Right lobe of liver (tissue), 6 donors: ENCODE measurements at regions of chr17 and their contacts with region 1.

Region 1: DNA sequence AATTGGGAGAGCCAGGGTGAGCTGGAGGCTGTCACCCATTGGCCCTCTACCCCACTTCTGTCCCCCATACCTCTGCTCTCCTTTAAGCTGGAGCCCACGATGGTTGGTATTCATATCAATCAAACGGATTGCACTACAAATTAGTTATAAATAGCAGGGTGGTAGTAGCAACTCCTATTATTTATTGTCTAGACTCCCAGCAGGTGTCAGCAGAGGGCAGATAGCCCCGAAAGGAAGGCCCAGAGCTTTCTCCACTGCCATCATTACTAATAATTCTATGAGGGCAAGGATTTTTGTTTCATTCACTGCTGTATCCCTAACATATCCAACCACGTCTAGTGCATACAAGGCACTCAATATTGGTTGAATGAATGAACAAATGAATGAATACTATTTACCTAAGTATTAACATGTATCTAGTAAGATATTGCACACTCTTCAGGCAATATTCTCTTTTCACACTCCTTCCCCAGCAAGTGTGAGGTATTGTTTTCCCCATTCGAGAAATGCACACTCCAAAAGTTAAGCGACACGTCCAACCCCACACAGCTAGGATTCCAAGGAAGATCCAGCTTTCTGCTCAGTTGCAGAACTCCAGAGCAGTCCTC is 6.3 kb downstream of the C17orf50 start:
- DNase-seq: peak in 1 of 3 donors; percentile 63
- ATAC-seq: peak; percentile 22 to 45 (median 42)
- H3K4me3 ChIP-seq: no peak overlapping the region
- H3K27ac ChIP-seq: no peak overlapping the region
- H3K4me1 ChIP-seq: peaks cover 0 to 6% (median 0%) of the 10 kb centered on the region in 4 donors
- H3K27me3 ChIP-seq: no peaks in the 10 kb centered on the region
- CTCF ChIP-seq: peak; percentile 56 to 67 (median 62)
- POLR2A ChIP-seq: no peak

Region 2: DNA sequence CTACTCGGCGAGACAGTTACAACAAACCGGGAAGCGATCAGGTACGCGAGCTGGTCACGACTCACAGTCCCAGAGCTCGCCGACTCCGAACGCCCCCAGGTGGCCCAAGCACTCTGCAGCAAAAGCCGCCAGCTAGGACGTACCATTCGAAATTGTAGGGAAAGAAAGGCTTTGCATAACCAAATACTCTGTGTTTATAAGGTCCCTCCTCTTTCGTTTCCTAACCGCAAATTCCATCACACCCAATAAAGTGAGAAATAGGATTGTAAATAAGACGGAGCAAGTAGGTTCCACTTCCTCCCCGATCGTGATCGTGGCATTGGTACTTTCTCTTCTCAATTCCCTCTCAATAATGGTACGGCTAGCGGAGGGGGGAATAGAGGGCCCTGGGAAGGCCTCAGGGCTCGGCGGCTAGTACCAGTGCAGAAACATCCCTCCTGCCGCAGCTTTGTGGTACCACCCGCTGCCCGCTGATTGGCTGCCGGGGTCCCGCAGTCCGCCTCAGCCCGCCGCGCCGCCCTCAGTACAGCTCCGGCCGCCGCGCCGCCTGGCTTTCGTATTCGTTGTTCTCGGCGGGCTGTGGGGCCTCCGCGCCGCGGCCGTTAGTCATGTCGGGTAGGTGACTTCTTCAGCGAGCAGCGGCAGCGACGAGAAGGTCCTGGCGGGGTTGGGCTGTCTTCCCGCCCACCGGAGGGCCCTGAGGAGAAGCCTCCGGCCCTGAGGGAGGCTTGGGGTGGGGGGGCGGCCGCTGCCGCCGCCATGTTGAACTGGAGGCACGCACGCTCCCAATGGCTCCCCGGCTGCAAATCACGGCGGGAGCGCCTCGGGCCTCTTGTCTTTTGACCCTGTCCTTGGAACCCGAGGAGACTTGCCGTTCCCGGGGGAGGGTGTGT is 42.2 kb after region 1 on chr17 and contains the start of gene TAF15:
- intact Hi-C with region 1: loop called (anchors 5 kb)
- DNase-seq: peak; percentile 95 to 97 (median 97)
- ATAC-seq: peak; percentile 94 to 98 (median 94)
- H3K4me3 ChIP-seq: peak within 1 kb of the TSS; percentile 81 to 91 (median 84)
- H3K27ac ChIP-seq: peak within 1 kb of the TSS; percentile 77 to 92 (median 88)
- H3K4me1 ChIP-seq: peaks cover 0 to 23% (median 8%) of the 10 kb centered on the region in 4 donors
- H3K27me3 ChIP-seq: no peaks in the 10 kb centered on the region
- CTCF ChIP-seq: peak; percentile 58 to 70 (median 68)
- POLR2A ChIP-seq: peak; percentile 99
- total RNA-seq, gene TAF15: 41.3 to 75.8 (median 65.4) TPM